ENCODE measurements at regions of chr4 and their contacts with region 1.

Region 1: GRCh38 chr4:18934197-18934596 is 912.6 kb upstream of the LCORL start:
- DNase-seq: no peak
- ATAC-seq: peak in 3 of 4 donors; percentile 34 to 55 (median 55)
- H3K4me3 ChIP-seq: no peak overlapping the region
- H3K27ac ChIP-seq: no peak overlapping the region
- H3K4me1 ChIP-seq: peaks cover 0 to 6% (median 0%) of the 10 kb centered on the region in 12 donors
- H3K27me3 ChIP-seq: no peaks in the 10 kb centered on the region
- CTCF ChIP-seq: peak in 9 of 12 donors; percentile 13 to 53 (median 32)
- POLR2A ChIP-seq: no peak

Region 2: DNA sequence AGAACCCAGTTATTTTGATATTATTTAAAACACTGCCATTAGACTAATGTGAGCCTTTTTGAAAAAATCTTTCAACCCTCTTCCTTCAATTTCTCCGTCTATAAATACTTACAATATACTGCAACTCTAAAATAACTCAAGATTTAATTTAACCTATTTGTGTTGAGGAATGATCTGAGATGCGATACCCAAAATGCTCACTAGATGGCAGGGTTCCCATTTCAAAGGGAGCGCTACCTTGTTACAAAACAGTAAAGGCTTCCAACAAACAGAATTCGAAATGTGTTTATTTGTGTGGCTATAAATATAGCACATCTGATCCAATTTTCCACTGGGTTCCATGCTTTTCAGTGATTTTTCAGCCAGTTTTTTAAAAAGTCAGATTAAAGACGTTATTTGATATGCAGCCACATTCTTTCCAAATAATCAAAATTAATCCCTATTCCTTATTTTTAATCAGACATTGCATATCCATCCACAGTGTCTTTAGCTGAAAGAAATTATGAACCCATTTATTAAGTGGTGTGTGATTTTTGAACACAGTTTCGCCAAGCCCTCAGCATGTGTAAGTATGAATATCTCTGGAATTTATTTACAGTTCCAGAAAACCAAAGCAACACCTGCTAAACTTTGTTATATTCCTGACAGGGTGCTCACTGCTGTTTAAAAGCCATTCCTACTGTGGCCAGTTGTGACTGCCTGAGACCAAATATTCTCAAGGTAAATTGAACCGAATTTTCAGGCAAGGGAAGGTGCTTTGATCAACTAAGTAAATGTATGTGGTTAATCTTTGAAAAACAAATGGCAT is 244.7 kb before region 1 on chr4:
- intact Hi-C with region 1: loop called in 9 of 10 experiments (anchors 1 to 5 kb)
- DNase-seq: peak in 2 of 5 donors; percentile 16 to 26
- ATAC-seq: peak in 1 of 4 donors; percentile 54
- H3K4me3 ChIP-seq: no peak overlapping the region
- H3K27ac ChIP-seq: no peak overlapping the region
- H3K4me1 ChIP-seq: peaks cover 0 to 10% (median 0%) of the 10 kb centered on the region in 12 donors
- H3K27me3 ChIP-seq: no peaks in the 10 kb centered on the region
- CTCF ChIP-seq: peak; percentile 75 to 89 (median 84)
- POLR2A ChIP-seq: no peak

Region 3: DNA sequence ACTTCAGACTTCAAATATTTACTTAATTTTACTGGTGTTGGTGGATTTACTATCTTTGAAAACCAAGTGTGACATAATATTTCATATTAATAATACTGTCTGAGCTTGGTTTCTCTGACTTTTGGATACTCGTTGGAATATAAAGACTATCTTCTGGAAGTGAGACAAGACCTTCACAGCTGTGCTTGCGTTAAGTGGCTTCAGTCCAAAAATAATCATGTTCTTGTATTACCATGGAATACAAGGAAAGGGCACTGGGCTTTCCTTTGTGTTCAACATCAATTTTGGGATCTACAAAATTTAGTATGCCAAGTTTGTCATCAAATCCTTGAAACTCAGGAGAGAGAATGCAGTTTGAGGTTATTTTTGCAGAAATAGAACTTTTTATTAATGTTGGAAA is 200.2 kb before region 1 on chr4:
- intact Hi-C with region 1: loop called in 1 of 10 experiments (anchors 5 kb)
- DNase-seq: no peak
- ATAC-seq: peak; percentile 39 to 69 (median 62)
- H3K4me3 ChIP-seq: no peak overlapping the region
- H3K27ac ChIP-seq: peak overlapping the region in 9 of 12 donors; percentile 20 to 73 (median 62)
- H3K4me1 ChIP-seq: peaks cover 0 to 18% (median 5%) of the 10 kb centered on the region in 12 donors
- H3K27me3 ChIP-seq: no peaks in the 10 kb centered on the region
- CTCF ChIP-seq: no peak
- POLR2A ChIP-seq: no peak

Region 4: DNA sequence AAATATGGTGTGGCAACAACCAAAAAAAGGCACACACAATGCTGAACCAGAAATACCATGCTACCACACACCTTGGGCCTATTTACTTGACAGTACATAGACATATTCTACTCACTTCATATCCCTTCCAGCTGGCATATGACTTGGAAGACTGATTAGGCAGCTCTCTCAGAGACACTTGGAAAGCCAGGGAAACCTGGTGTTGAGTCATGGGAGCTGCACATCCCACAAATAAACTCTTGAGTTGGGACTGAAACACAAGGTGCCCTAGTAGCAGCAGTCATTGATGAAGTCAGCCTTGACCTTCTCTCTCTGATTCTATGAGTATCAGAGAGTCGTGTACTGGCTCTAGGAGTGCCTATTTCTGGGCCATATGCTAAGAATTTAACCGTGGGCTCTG is 136.1 kb before region 1 on chr4:
- intact Hi-C with region 1: loop called in 1 of 10 experiments (anchors 5 kb)
- DNase-seq: no peak
- ATAC-seq: peak; percentile 45 to 98 (median 72)
- H3K4me3 ChIP-seq: no peak overlapping the region
- H3K27ac ChIP-seq: no peak overlapping the region
- H3K4me1 ChIP-seq: no peaks in the 10 kb centered on the region
- H3K27me3 ChIP-seq: no peaks in the 10 kb centered on the region
- CTCF ChIP-seq: no peak
- POLR2A ChIP-seq: no peak

Region 5: GRCh38 chr4:18914182-18914581 is 20.0 kb before region 1 on chr4:
- intact Hi-C with region 1: loop called in 1 of 10 experiments (anchors 2 kb)
- DNase-seq: no peak
- ATAC-seq: no peak
- H3K4me3 ChIP-seq: no peak overlapping the region
- H3K27ac ChIP-seq: no peak overlapping the region
- H3K4me1 ChIP-seq: peaks cover 0 to 5% (median 0%) of the 10 kb centered on the region in 12 donors
- H3K27me3 ChIP-seq: no peaks in the 10 kb centered on the region
- CTCF ChIP-seq: no peak
- POLR2A ChIP-seq: no peak